ENCODE measurements at regions of chr22 and their contacts with region 1.

Region 1: GRCh38 chr22:19495562-19496323 is 16.0 kb downstream of the CDC45 start:
- DNase-seq: peak; percentile 79 to 89 (median 89)
- H3K4me3 ChIP-seq: no peak overlapping the region
- H3K27ac ChIP-seq: no peak overlapping the region
- H3K4me1 ChIP-seq: peaks cover 0 to 6% (median 3%) of the 10 kb centered on the region in 4 experiments
- H3K27me3 ChIP-seq: no peaks in the 10 kb centered on the region

Region 2: DNA sequence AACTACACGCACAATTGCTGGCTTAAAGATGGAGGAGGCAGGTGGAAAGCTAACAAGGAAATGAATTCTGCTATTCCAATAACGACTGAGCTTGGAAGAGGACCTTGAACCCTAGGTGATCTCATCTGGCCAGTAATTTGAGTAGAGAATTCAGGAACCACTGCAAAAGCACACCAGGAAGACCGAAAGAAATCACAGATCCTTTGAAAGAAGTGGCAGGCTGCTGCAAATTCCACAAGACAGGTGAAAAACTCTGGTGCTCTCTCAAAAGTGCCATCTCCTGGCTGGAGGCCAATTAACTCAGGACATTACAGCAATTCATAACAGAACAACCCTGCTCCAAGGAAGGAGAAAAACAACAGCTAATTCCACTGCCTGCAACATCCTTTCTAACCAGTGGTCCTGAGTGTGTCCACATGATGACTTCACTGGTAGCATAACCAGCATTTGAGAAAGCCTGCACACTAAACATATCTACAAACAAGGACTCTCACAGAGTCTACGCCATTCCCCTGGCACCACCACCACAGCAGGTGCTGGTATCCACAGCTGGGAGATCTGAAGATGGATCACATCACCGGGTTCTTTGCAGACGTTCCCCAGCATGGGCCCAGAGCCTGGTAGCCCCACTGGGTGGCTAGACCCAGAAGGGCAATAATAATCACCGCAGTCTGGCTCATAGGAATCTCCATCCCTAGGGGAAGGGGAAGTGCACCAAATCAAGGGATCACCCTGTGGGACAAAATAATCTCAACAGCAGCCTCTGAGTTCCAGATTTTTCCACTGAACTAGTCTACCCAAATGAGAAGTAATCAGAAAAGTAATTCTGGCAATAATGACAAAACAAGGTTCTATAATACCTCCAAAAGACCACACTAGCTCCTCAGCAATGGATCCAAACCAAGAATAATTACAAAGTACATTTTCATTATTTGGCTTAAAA is 159.3 kb before region 1 on chr22:
- CTCF ChIA-PET with region 1: no interaction called
- POLR2A ChIA-PET with region 1: no interaction called
- DNase-seq: no peak
- H3K4me3 ChIP-seq: no peak overlapping the region
- H3K27ac ChIP-seq: no peak overlapping the region
- H3K4me1 ChIP-seq: no peaks in the 10 kb centered on the region
- H3K27me3 ChIP-seq: no peaks in the 10 kb centered on the region

Region 3: DNA sequence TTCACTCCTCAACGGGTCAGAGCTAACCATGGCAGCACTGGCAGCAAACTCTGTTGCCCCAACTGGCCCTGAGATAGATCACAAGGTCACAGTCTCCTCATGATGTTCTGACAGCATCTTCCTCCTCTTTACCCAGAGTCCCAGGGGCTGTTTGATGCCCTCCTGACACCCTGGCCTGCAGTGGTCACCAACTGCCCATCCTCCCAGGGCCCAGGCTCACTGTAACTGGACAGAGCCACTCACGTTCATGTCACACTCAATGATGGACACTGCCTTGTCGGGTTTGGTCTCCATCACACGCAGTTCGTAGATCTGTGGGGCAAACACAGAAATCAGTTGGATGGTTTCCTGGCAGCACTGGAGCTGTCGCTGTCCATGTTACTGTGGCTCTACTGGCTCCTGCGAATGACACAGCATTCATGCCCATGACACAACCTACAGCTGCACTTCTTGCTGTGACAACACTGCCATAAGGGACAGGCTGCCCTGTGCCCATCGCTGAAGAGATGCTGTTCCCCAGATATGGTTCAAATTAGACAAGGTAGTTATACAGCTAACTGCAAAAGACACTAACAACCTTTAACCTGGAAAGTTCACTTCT is 37.8 kb before region 1 on chr22:
- CTCF ChIA-PET with region 1: no interaction called
- POLR2A ChIA-PET with region 1: no interaction called
- DNase-seq: no peak
- H3K4me3 ChIP-seq: no peak overlapping the region
- H3K27ac ChIP-seq: no peak overlapping the region
- H3K4me1 ChIP-seq: no peaks in the 10 kb centered on the region
- H3K27me3 ChIP-seq: no peaks in the 10 kb centered on the region

Region 4: DNA sequence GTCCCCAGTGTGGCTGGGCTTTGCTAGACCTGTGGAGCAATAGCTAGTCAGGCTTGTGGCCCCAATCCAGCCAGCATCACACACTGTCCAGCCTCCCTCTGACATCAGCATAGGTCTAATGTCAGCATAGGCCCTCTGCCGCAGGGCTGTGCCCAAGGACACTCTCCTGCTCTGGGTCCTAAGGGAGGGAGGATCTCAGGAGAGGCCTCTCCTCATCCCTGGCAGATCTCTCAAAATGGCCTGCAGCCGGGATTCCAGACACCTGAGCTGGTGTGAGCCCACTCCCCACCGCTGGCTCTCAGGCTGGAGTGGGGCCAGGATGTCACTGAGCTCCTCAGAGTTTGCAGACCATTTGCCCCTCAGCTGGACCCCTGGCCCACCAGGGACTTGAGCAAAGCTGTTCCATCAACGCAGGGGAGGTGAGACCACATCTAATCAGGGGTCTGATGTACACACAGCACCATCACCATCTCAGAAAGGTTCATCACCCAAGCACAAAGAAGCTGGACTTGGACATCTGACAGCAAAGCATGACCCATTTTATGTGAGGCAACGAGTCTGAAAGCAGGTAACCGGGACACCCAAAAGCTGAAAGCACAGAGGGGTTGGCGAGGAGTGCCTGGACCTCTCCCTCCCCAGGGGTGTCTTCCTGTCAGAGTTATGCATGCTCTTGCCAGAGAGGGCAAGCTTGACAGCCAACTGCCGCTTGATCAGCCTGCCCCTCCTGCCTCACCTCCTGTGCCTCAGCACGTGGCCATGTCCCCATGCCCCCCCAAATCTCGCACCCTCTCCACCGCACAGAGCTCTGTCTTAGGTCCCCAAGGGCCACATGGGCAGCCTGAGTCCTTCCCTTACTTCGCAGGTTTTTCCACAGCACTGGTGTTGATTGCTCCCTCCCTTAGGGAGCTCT is 148.8 kb after region 1 on chr22:
- CTCF ChIA-PET with region 1: interaction called, 10 read pairs
- POLR2A ChIA-PET with region 1: no interaction called
- DNase-seq: no peak
- H3K4me3 ChIP-seq: peak overlapping the region in 2 of 7 experiments; percentile 12 to 53
- H3K27ac ChIP-seq: peak overlapping the region; percentile 50 to 57
- H3K4me1 ChIP-seq: peaks cover 1 to 43% (median 20%) of the 10 kb centered on the region in 4 experiments
- H3K27me3 ChIP-seq: peaks cover 0 to 2% (median 0%) of the 10 kb centered on the region in 5 experiments

Measured in common myeloid progenitor, CD34-positive (primary cell).